ENCODE measurements at regions of chr17 and their contacts with region 1.

Region 1: DNA sequence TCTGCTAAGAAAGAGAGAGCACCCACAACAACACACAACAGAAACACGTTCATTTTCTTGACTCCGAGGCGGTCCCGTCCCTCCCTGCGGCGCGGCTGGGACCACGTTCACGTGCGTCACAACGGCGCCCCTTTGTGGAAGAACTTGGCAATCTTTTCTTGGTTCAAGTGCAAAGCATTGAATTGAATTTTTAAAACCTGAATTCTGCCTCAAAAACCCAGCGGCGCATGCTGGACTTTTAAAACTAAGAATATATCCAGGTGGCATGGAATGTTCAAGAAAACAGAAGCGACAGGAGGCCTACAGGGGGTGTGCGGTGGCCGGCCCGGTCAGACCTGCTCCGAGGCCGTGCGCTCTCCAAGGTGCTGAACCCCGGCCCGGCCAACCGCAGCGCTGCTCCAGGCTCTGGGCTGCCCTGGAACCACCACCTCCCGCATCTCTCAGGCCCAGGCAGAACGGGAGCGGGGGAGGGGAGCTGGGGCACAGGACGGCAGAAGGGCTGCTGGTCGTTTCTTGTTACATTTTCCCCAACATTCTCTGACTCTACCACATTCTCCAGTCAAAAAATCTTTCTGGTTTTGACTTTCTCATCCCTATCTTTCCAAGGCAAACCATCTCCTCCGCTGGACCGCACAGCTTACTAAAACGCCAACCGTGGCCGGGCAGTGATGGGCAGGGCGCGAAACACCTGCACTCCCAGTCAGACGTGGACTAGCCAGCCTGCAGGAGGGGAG is 3.4 kb upstream of the HEXD start:
- DNase-seq: peak; percentile 86
- ATAC-seq: peak; percentile 87

Region 2: GRCh38 chr17:82351716-82352488 is 62.8 kb before region 1 on chr17:
- intact Hi-C with region 1: loop called (anchors 2 kb)
- DNase-seq: peak; percentile 90
- ATAC-seq: peak; percentile 79

Region 3: DNA sequence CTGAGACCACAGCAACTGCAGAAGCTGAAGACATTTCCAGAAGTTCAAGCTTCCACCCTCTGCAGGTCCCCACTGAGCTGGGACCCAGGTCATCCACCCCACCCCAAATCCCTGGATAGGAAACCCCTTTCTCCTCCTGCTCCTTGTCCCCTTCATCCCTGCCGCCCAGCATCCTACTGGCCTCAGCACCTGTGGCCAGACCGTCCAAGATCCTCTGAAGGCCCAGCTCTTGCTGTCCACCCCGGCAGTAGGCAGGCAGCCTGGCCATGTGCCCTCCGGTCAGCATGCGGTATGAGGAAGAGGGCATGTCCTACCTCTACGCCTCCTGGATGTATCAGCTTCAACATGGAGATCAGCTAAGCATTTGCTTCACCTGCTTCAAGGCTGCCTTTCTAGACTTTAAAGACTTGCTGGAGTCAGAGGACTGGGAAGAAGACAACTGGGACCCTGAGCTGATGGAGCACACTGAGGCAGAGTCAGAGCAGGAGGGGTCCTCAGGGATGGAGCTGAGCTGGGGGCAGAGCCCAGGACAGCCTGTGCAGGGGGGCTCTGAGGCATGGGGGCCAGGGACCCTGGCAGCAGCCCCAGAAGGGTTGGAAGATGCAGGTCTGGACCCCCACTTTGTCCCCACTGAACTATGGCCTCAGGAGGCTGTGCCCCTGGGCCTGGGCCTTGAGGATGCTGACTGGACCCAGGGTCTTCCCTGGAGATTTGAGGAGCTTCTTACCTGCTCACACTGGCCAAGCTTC is 52.7 kb before region 1 on chr17:
- intact Hi-C with region 1: no loop called
- DNase-seq: no peak
- ATAC-seq: no peak